Activated CD4-positive, alpha-beta T cell treated with anti-CD3 and anti-CD28 coated beads, Interleukin-2, amount 10 ng/mL, durations not matched to agents 7 days and 5 days (primary cell): ENCODE measurements at regions of chr2 and their contacts with region 1.

Region 1: GRCh38 chr2:200509612-200510433 is at the start of gene KCTD18:
- DNase-seq: peak; percentile 91
- H3K4me3 Mint-ChIP-seq: peak within 1 kb of the TSS; percentile 92
- H3K27ac Mint-ChIP-seq: peak within 1 kb of the TSS; percentile 91
- H3K4me1 Mint-ChIP-seq: peaks cover 31% of the 10 kb centered on the region
- H3K27me3 Mint-ChIP-seq: no peaks in the 10 kb centered on the region
- total RNA-seq, gene KCTD18: 20.4 to 20.5 TPM

Region 2: GRCh38 chr2:200525882-200526651 is 16.2 kb after region 1 on chr2 and contains the start of gene SGO2:
- CTCF ChIA-PET with region 1: interaction called, 13 read pairs
- POLR2A ChIA-PET with region 1: no interaction called
- DNase-seq: peak; percentile 97
- H3K4me3 Mint-ChIP-seq: peak within 1 kb of the TSS; percentile 88
- H3K27ac Mint-ChIP-seq: peak within 1 kb of the TSS; percentile 89
- H3K4me1 Mint-ChIP-seq: peaks cover 39% of the 10 kb centered on the region
- H3K27me3 Mint-ChIP-seq: peaks cover 6% of the 10 kb centered on the region
- total RNA-seq, gene SGO2: 47.7 to 55.2 TPM